Ascending aorta (tissue), 2 donors: ENCODE measurements at regions of chr3 and their contacts with region 1.

Region 1: GRCh38 chr3:29335438-29335837 is 54.6 kb downstream of the RBMS3 start:
- DNase-seq: peak; percentile 22 to 95
- H3K4me3 ChIP-seq: peak overlapping the region; percentile 32 to 35
- H3K27ac ChIP-seq: peak overlapping the region; percentile 65 to 88
- H3K4me1 ChIP-seq: peaks cover 0 to 69% of the 10 kb centered on the region in 2 donors
- H3K27me3 ChIP-seq: no peaks in the 10 kb centered on the region
- CTCF ChIP-seq: no peak

Region 2: DNA sequence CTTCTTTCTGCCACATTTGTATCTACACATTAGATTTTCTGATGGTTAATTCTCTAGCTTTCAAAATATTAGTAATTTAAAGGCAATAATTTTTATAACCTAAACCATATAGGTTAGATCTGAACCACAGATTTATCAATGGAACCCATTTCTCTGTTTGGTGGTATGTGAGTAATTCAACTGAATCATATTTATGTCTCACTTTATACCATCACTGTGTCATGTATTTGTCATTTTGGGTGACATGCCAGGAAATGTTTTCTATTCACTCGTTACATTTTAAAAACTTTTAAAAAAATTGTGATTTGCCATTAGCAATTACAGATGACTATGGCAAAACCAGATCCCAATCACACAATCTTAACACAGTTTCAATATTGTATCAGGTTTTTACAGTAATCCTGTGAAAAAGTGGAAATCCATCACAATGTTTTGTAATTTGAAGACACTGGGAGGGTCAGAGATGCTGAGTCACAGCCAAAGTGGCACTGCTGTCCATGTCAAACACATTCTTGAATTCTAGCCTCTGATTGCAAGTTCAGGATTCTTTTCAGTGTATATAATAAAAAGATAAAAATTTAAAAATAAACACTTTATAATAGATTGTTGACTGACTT is 410.6 kb before region 1 on chr3:
- intact Hi-C with region 1: no loop called
- DNase-seq: no peak
- H3K4me3 ChIP-seq: no peak overlapping the region
- H3K27ac ChIP-seq: no peak overlapping the region
- H3K4me1 ChIP-seq: no peaks in the 10 kb centered on the region
- H3K27me3 ChIP-seq: no peaks in the 10 kb centered on the region
- CTCF ChIP-seq: no peak

Region 3: GRCh38 chr3:29384640-29385039 is 49.2 kb after region 1 on chr3:
- intact Hi-C with region 1: loop called (anchors 5 kb)
- DNase-seq: peak in 1 of 2 donors; percentile 67
- H3K4me3 ChIP-seq: peak overlapping the region in 1 of 2 donors; percentile 9
- H3K27ac ChIP-seq: peak overlapping the region; percentile 77 to 84
- H3K4me1 ChIP-seq: peaks cover 2 to 37% of the 10 kb centered on the region in 2 donors
- H3K27me3 ChIP-seq: no peaks in the 10 kb centered on the region
- CTCF ChIP-seq: no peak

Region 4: GRCh38 chr3:29764603-29765254 is 429.3 kb after region 1 on chr3:
- intact Hi-C with region 1: loop called (anchors 2 kb)
- DNase-seq: no peak
- H3K4me3 ChIP-seq: no peak overlapping the region
- H3K27ac ChIP-seq: no peak overlapping the region
- H3K4me1 ChIP-seq: peaks cover 0 to 20% of the 10 kb centered on the region in 2 donors
- H3K27me3 ChIP-seq: no peaks in the 10 kb centered on the region
- CTCF ChIP-seq: peak; percentile 51 to 65 (median 53)